CD4-positive, alpha-beta memory T cell (primary cell): ENCODE measurements at regions of chr6 and their contacts with region 1.

Region 1: GRCh38 chr6:87154993-87155841 is at the start of gene ZNF292:
- DNase-seq: peak; percentile 92 to 96 (median 93)
- H3K4me3 ChIP-seq: peak within 1 kb of the TSS; percentile 54 to 93
- H3K4me3 Mint-ChIP-seq: peak within 1 kb of the TSS; percentile 91 to 100 (median 96)
- H3K27ac ChIP-seq: peak within 1 kb of the TSS; percentile 91
- H3K27ac Mint-ChIP-seq: peak within 1 kb of the TSS; percentile 92 to 99 (median 96)
- H3K4me1 ChIP-seq: peaks cover 73% of the 10 kb centered on the region
- H3K4me1 Mint-ChIP-seq: peaks cover 38 to 70% (median 51%) of the 10 kb centered on the region in 4 donors
- H3K27me3 ChIP-seq: no peaks in the 10 kb centered on the region
- H3K27me3 Mint-ChIP-seq: no peaks in the 10 kb centered on the region
- total RNA-seq, gene ZNF292: 74.8 to 82.1 TPM

Region 2: DNA sequence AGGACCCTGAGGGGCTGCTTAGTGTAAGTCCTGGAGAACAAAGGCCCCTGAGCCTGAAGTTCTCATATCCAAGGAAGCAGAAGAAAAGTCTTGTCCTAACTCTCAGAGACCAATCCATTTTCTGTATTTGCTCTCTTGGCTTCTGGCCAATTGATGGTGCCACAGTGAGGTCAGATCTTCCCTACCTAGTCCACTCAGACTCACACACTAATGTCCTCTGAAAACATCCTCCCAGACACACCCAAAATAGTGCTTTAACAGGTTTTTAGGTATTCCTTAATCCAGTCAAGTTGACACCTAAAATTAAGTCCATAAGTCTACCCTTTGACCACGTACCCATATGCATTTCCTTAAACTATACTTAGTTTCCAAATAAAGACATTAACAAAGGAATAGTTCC is 29.6 kb after region 1 on chr6:
- CTCF ChIA-PET with region 1: no interaction called
- POLR2A ChIA-PET with region 1: no interaction called
- intact Hi-C with region 1: loop called (anchors 5 kb)
- DNase-seq: no peak
- H3K4me3 ChIP-seq: no peak overlapping the region
- H3K4me3 Mint-ChIP-seq: peak overlapping the region in 1 of 8 donors; percentile 45
- H3K27ac ChIP-seq: no peak overlapping the region
- H3K27ac Mint-ChIP-seq: peak overlapping the region in 2 of 7 donors; percentile 32 to 37
- H3K4me1 ChIP-seq: peaks cover 52% of the 10 kb centered on the region
- H3K4me1 Mint-ChIP-seq: peaks cover 39 to 79% (median 56%) of the 10 kb centered on the region in 4 donors
- H3K27me3 ChIP-seq: no peaks in the 10 kb centered on the region
- H3K27me3 Mint-ChIP-seq: no peaks in the 10 kb centered on the region

Region 3: DNA sequence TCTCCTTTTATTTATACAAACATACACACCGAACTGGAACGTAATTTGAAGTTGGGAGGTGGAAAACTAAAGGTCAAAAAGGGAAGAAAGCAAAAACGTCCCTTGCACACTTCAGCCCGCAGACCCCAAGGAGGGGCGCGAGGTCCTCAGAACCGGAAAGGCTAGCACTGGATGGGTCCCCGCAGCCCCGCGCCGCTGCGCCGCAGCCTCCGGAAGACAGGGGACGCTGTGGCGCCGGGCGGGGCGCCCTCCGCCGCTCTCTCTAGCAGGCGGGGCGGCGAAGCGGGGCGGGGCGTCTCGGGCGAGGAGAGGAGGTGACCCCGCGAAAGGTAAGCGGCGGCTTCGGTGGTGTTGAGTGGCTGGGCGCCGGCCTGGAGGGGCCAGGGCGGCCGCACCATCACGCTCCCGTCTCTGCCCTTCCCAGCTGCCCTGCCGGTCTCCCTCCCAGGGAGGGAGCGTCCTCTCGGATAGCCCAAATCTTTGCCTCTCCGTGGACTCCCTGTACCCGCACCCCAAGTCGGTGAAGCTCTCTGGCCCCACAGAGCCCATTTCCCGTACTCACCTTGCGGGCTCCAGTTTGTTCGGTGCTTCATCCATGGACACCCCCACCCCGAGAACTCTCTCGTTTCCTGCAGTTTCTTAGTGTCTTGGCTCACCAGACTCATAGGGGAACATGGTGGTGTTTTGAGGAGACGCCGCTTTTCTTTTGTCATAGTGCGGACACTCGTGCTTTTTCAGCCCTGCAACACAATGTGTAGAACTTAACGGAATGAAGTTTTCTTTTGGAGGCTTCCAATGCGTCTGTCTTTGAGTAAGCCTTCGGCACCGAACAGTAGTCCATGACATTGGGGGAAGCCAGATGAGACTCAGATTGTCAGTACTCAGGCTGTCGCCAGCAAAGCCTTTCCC is 167.3 kb after region 1 on chr6 and contains the start of gene SMIM8:
- CTCF ChIA-PET with region 1: no interaction called
- POLR2A ChIA-PET with region 1: no interaction called
- intact Hi-C with region 1: loop called (anchors 1 kb)
- DNase-seq: peak; percentile 79 to 85 (median 83)
- H3K4me3 ChIP-seq: peak within 1 kb of the TSS; percentile 88 to 92
- H3K4me3 Mint-ChIP-seq: peak within 1 kb of the TSS; percentile 94 to 99 (median 98)
- H3K27ac ChIP-seq: peak within 1 kb of the TSS; percentile 70
- H3K27ac Mint-ChIP-seq: peak within 1 kb of the TSS; percentile 75 to 97 (median 96)
- H3K4me1 ChIP-seq: no peaks in the 10 kb centered on the region
- H3K4me1 Mint-ChIP-seq: peaks cover 8 to 28% (median 15%) of the 10 kb centered on the region in 4 donors
- H3K27me3 ChIP-seq: no peaks in the 10 kb centered on the region
- H3K27me3 Mint-ChIP-seq: peaks cover 2 to 3% of the 10 kb centered on the region in 2 donors
- total RNA-seq, gene SMIM8: 11.1 to 12.5 TPM

Region 4: DNA sequence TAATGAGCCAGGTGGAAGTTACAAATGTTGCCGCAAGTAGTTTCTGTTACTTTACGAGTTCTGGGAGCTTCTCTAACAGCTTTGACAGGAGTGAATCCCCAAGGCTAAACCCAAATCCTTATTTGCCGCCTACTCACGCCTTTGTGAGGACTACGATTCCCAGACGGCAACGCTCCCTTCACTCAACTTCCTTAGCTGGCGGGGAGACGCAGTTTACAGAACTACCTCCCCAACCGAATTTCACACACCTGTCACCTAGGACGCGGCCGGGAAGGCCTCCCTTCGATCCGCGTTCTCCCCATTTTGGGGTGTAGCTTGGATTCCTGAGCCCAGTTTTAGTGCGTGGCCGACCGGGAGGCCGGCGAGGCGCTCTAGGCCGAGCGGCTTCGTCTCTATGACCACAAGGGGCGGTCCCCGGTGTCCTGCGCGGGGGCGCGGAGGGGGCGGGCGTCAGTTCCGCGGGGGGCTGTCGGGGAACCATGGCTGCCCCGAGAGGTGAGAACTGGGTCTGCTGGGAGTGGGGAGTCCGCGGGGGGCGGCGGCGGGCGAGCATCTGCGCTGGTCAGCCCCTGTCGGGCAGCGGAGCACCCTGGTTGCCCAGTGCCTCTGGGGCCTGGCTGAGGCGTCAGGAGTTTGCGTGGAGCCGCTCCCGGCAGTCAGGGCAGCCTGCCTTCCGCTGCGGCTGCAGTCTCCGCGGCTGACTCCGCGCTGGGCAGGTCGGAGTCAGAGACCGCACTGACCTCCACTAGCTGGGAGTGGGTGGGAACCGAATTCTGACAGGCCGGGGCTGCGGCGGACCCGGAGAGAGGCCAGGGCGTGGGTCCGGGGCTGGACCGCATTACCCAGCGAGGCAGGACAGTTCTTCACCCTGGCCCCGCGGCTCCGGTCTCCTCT is 317.6 kb after region 1 on chr6 and contains the start of gene SLC35A1:
- CTCF ChIA-PET with region 1: no interaction called
- POLR2A ChIA-PET with region 1: interaction called, 4 read pairs
- intact Hi-C with region 1: loop called (anchors 1 kb)
- DNase-seq: peak; percentile 80 to 92 (median 86)
- H3K4me3 ChIP-seq: peak within 1 kb of the TSS; percentile 67 to 72
- H3K4me3 Mint-ChIP-seq: peak within 1 kb of the TSS; percentile 97 to 99 (median 99)
- H3K27ac ChIP-seq: peak within 1 kb of the TSS; percentile 94
- H3K27ac Mint-ChIP-seq: peak within 1 kb of the TSS; percentile 93 to 100 (median 100)
- H3K4me1 ChIP-seq: peaks cover 18% of the 10 kb centered on the region
- H3K4me1 Mint-ChIP-seq: peaks cover 9 to 27% (median 16%) of the 10 kb centered on the region in 4 donors
- H3K27me3 ChIP-seq: no peaks in the 10 kb centered on the region
- H3K27me3 Mint-ChIP-seq: peaks cover 0 to 2% of the 10 kb centered on the region in 2 donors
- total RNA-seq, gene SLC35A1: 20.4 to 26.2 TPM